Activated naive CD4-positive, alpha-beta T cell treated with anti-CD3 and anti-CD28 coated beads, Interleukin-2, amount 10 ng/mL, durations not matched to agents 7 days and 5 days (primary cell): ENCODE measurements at regions of chr1 and their contacts with region 1.

Region 1: GRCh38 chr1:37682334-37682987 is 9.9 kb upstream of the CDCA8 start:
- DNase-seq: peak; percentile 86
- H3K4me3 Mint-ChIP-seq: no peak overlapping the region
- H3K27ac Mint-ChIP-seq: no peak overlapping the region
- H3K4me1 Mint-ChIP-seq: peaks cover 3% of the 10 kb centered on the region
- H3K27me3 Mint-ChIP-seq: peaks cover 3% of the 10 kb centered on the region

Region 2: DNA sequence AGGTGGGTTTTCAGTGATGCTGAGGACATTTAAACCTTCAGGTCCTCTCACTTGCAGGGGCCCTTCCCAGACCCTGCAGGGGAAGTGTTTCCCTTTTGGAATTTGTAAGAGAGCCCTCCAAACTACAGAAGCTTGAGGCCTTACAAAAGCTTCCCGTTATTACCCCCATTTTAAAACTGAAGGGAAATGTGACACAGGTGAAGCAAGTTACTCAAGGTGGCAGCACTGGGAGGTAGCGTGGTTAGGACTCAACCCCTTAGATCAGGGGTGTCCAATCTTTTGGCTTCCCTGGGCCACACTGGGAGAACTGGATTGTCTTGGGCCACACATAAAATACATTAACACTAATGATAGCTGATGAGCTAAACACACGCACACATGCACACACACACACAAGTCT is 223.9 kb before region 1 on chr1:
- CTCF ChIA-PET with region 1: interaction called, 46 read pairs
- DNase-seq: no peak
- H3K4me3 Mint-ChIP-seq: no peak overlapping the region
- H3K27ac Mint-ChIP-seq: no peak overlapping the region
- H3K4me1 Mint-ChIP-seq: peaks cover 7% of the 10 kb centered on the region
- H3K27me3 Mint-ChIP-seq: no peaks in the 10 kb centered on the region

Region 3: GRCh38 chr1:37561133-37562132 is 121.0 kb before region 1 on chr1:
- CTCF ChIA-PET with region 1: interaction called, 27 read pairs
- DNase-seq: peak; percentile 62
- H3K4me3 Mint-ChIP-seq: no peak overlapping the region
- H3K27ac Mint-ChIP-seq: peak overlapping the region; percentile 67
- H3K4me1 Mint-ChIP-seq: peaks cover 21% of the 10 kb centered on the region
- H3K27me3 Mint-ChIP-seq: peaks cover 9% of the 10 kb centered on the region

Region 4: GRCh38 chr1:37595440-37596319 is 86.8 kb before region 1 on chr1 and contains the start of gene GNL2:
- CTCF ChIA-PET with region 1: interaction called, 52 read pairs
- DNase-seq: peak; percentile 98
- H3K4me3 Mint-ChIP-seq: peak within 1 kb of the TSS; percentile 90
- H3K27ac Mint-ChIP-seq: peak within 1 kb of the TSS; percentile 95
- H3K4me1 Mint-ChIP-seq: peaks cover 35% of the 10 kb centered on the region
- H3K27me3 Mint-ChIP-seq: peaks cover 11% of the 10 kb centered on the region

Region 5: GRCh38 chr1:37602750-37603694 is 79.4 kb before region 1 on chr1:
- CTCF ChIA-PET with region 1: interaction called, 52 read pairs
- DNase-seq: peak; percentile 48
- H3K4me3 Mint-ChIP-seq: no peak overlapping the region
- H3K27ac Mint-ChIP-seq: no peak overlapping the region
- H3K4me1 Mint-ChIP-seq: no peaks in the 10 kb centered on the region
- H3K27me3 Mint-ChIP-seq: peaks cover 33% of the 10 kb centered on the region

Region 6: DNA sequence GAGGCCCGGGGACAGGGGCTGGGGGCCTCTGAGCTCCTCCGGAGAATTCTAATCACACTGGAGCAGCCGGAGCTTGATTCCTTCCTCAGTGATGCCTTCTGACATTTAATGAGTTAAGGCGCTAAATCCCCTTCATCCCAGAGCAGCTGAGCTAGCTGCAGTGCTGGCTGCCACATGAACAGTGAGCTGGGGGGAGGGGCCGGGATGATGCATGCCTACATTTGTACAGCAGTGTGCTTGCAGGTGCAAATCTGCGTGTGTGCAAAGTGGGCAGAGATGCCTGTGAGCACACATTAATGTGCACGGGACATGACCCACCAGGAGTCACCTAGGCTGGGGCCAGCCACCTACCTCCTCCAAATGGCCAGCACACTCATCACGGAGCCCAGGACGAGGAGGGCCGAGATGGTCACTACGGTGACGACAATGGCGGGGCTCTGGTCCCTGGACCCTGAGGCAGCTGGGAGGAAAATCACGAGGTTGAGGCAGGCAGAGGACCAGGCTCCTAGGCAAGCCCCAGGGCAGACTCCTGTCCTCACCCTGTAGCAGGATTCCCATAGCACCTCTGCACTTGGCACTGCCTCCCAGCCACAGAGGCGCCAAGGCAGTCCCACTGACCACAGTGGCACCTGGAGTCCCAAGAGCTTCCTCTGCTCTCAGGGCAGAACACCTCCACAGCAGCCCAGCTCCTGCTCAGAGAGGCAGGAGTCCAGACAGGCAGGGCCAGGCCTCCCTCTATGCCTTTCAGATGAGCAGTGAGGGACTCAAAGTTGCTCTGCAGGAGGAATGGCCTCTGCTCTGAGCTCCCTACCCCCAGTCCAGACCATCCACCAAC is 44.5 kb after region 1 on chr1:
- CTCF ChIA-PET with region 1: no interaction called
- DNase-seq: no peak
- H3K4me3 Mint-ChIP-seq: no peak overlapping the region
- H3K27ac Mint-ChIP-seq: no peak overlapping the region
- H3K4me1 Mint-ChIP-seq: no peaks in the 10 kb centered on the region
- H3K27me3 Mint-ChIP-seq: peaks cover 77% of the 10 kb centered on the region